Heart left ventricle (tissue), 16 donors: ENCODE measurements at regions of chr11 and their contacts with region 1.

Region 1: GRCh38 chr11:47980245-47981049 is at the start of gene PTPRJ:
- DNase-seq: peak; percentile 58 to 81 (median 68)
- ATAC-seq: peak; percentile 42 to 75 (median 66)
- H3K4me3 ChIP-seq: peak within 1 kb of the TSS; percentile 65 to 97 (median 85)
- H3K27ac ChIP-seq: peak within 1 kb of the TSS in 11 of 12 donors; percentile 3 to 93 (median 57)
- H3K4me1 ChIP-seq: peaks cover 0 to 47% (median 12%) of the 10 kb centered on the region in 12 donors
- H3K27me3 ChIP-seq: no peaks in the 10 kb centered on the region
- CTCF ChIP-seq: no peak
- POLR2A ChIP-seq: no peak
- total RNA-seq, gene PTPRJ: 5.5 to 39.0 (median 6.9) TPM

Region 2: GRCh38 chr11:47724041-47724729 is 256.3 kb before region 1 on chr11:
- intact Hi-C with region 1: no loop called
- DNase-seq: peak in 1 of 5 donors; percentile 40
- ATAC-seq: peak; percentile 39 to 78 (median 60)
- H3K4me3 ChIP-seq: no peak overlapping the region
- H3K27ac ChIP-seq: peak overlapping the region in 6 of 12 donors; percentile 7 to 65 (median 32)
- H3K4me1 ChIP-seq: peaks cover 0 to 17% (median 8%) of the 10 kb centered on the region in 12 donors
- H3K27me3 ChIP-seq: no peaks in the 10 kb centered on the region
- CTCF ChIP-seq: no peak
- POLR2A ChIP-seq: no peak

Region 3: GRCh38 chr11:48013269-48013901 is 32.9 kb after region 1 on chr11:
- intact Hi-C with region 1: no loop called
- DNase-seq: peak in 4 of 5 donors; percentile 37 to 58 (median 44)
- ATAC-seq: peak; percentile 68 to 79 (median 73)
- H3K4me3 ChIP-seq: no peak overlapping the region
- H3K27ac ChIP-seq: peak overlapping the region in 1 of 12 donors; percentile 84
- H3K4me1 ChIP-seq: peaks cover 0 to 96% (median 6%) of the 10 kb centered on the region in 12 donors
- H3K27me3 ChIP-seq: no peaks in the 10 kb centered on the region
- CTCF ChIP-seq: no peak
- POLR2A ChIP-seq: no peak

Region 4: GRCh38 chr11:48063424-48063978 is 83.1 kb after region 1 on chr11:
- intact Hi-C with region 1: loop called in 1 of 10 experiments (anchors 10 kb)
- DNase-seq: peak in 1 of 5 donors; percentile 33
- ATAC-seq: peak; percentile 32 to 77 (median 72)
- H3K4me3 ChIP-seq: no peak overlapping the region
- H3K27ac ChIP-seq: peak overlapping the region in 9 of 12 donors; percentile 7 to 82 (median 47)
- H3K4me1 ChIP-seq: peaks cover 0 to 87% (median 19%) of the 10 kb centered on the region in 12 donors
- H3K27me3 ChIP-seq: no peaks in the 10 kb centered on the region
- CTCF ChIP-seq: no peak
- POLR2A ChIP-seq: no peak

Region 5: DNA sequence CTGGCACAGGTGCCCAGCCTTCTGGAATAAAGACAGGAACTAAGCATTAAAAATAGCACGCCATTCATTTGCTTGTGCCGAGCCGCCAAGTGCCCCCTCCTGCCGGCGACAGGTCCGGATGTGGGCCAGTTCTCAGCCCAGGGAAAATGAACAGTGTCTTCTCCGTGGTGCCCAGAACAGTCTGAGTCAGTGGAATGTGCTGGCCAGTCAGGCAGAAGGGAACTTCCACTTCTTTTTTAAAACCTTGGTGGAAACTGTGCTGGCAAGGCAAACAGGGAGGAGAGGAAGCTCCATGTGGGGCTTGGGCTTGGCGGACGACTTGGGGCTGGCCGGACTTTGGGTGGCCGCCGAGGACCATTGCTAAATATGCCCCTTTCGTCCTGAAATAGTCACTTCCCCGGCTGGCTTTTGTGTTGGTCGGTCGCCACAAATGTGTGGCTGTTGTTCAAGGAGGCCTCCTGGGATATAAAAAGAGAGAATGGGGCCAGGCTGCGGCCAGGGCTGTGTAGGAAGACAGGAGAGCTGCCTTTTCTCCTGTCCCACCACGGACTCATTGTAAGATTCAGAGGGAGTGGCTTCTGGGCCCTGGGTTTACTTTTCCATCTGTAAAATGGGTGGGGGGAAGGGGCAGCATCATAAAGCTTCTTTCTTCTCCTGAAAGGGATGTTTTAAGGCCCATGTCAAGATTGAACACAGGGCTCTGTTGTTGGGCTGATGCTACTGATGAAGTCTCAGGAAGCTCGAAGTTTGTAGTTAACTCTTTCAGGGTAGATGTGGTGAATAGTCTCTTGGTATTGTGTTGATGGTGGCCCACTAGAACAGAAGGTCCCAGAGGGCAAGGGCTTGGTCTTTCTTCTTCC is 100.9 kb after region 1 on chr11:
- intact Hi-C with region 1: loop called in 1 of 10 experiments (anchors 5 kb)
- DNase-seq: peak; percentile 75 to 89 (median 79)
- ATAC-seq: peak; percentile 97 to 98 (median 98)
- H3K4me3 ChIP-seq: peak overlapping the region in 8 of 12 donors; percentile 17 to 43 (median 24)
- H3K27ac ChIP-seq: peak overlapping the region; percentile 47 to 91 (median 80)
- H3K4me1 ChIP-seq: peaks cover 0 to 61% (median 17%) of the 10 kb centered on the region in 12 donors
- H3K27me3 ChIP-seq: no peaks in the 10 kb centered on the region
- CTCF ChIP-seq: peak in 2 of 12 donors; percentile 5 to 18
- POLR2A ChIP-seq: no peak